ENCODE measurements at regions of chr10 and their contacts with region 1.

Region 1: GRCh38 chr10:48656241-48656913 is 28.3 kb upstream of the WDFY4 start:
- DNase-seq: peak; percentile 92
- ATAC-seq: peak; percentile 89 to 92

Region 2: GRCh38 chr10:48551861-48552591 is 104.4 kb before region 1 on chr10:
- intact Hi-C with region 1: loop called (anchors 1 to 2 kb)
- DNase-seq: peak; percentile 48
- ATAC-seq: peak; percentile 60 to 62

Region 3: GRCh38 chr10:48976196-48976595 is 319.8 kb after region 1 on chr10:
- intact Hi-C with region 1: loop called (anchors 5 to 10 kb)
- DNase-seq: no peak
- ATAC-seq: peak; percentile 41 to 77

Region 4: GRCh38 chr10:49164559-49165188 is 508.3 kb after region 1 on chr10:
- intact Hi-C with region 1: loop called (anchors 5 to 10 kb)
- DNase-seq: no peak
- ATAC-seq: peak; percentile 69 to 80